Activated CD8-positive, alpha-beta T cell treated with anti-CD3 and anti-CD28 coated beads for 36 hours (primary cell): ENCODE measurements at regions of chr5 and their contacts with region 1.

Region 1: GRCh38 chr5:151068433-151069197 is 12.2 kb downstream of the TNIP1 start:
- DNase-seq: peak; percentile 81
- ATAC-seq: peak; percentile 80
- H3K4me3 Mint-ChIP-seq: peak overlapping the region; percentile 35
- H3K27ac Mint-ChIP-seq: peak overlapping the region; percentile 85
- H3K4me1 Mint-ChIP-seq: peaks cover 95% of the 10 kb centered on the region
- H3K27me3 Mint-ChIP-seq: no peaks in the 10 kb centered on the region
- CTCF ChIP-seq: no peak

Region 2: GRCh38 chr5:151093476-151093889 is 24.9 kb after region 1 on chr5:
- CTCF ChIA-PET with region 1: interaction called, 5 read pairs
- POLR2A ChIA-PET with region 1: interaction called, 12 read pairs
- intact Hi-C with region 1: no loop called
- DNase-seq: no peak
- ATAC-seq: peak; percentile 15
- H3K4me3 Mint-ChIP-seq: peak overlapping the region; percentile 61
- H3K27ac Mint-ChIP-seq: peak overlapping the region; percentile 93
- H3K4me1 Mint-ChIP-seq: peaks cover 68% of the 10 kb centered on the region
- H3K27me3 Mint-ChIP-seq: peaks cover 4% of the 10 kb centered on the region
- CTCF ChIP-seq: no peak

Region 3: DNA sequence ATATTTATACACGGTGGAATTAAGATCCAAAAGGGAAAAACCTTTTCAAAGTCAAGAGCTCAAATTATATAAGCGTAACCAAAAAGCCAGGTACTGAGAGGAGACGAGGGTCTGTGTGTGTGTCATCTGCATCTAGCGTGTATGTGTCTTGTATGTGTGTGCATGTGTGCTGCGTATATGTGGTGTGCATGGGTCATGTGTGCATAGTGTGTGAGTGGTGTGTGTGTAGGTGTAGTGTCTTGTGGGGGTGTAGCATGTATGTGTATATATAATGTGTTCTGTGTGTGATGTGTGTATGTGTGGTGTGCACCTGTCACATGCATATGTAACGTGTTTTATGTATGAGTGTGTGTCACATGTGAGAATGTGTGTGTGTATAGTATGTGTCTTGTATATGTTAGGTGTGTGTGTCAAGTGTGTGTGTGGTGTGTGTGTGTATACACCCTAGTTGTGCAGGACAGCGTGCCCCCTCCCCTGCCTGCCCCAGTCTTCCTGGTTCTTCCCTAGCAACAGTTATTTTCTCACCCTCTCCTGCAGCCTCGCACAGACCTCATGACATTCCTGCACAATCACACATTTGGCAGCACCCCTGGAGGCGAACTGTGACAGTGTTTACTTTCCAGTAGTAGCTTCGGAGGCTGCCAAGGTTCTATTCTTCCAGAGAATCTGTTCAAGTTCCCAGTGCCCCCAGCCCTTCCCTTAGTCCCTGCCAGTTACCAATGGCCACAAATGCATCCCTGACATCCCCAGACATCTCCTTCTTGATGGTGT is 39.3 kb after region 1 on chr5:
- CTCF ChIA-PET with region 1: interaction called, 4 read pairs
- POLR2A ChIA-PET with region 1: no interaction called
- intact Hi-C with region 1: loop called (anchors 5 kb)
- DNase-seq: no peak
- ATAC-seq: no peak
- H3K4me3 Mint-ChIP-seq: no peak overlapping the region
- H3K27ac Mint-ChIP-seq: no peak overlapping the region
- H3K4me1 Mint-ChIP-seq: no peaks in the 10 kb centered on the region
- H3K27me3 Mint-ChIP-seq: no peaks in the 10 kb centered on the region
- CTCF ChIP-seq: no peak